BJ (cell line): ENCODE measurements at regions of chr7 and their contacts with region 1.

Region 1: DNA sequence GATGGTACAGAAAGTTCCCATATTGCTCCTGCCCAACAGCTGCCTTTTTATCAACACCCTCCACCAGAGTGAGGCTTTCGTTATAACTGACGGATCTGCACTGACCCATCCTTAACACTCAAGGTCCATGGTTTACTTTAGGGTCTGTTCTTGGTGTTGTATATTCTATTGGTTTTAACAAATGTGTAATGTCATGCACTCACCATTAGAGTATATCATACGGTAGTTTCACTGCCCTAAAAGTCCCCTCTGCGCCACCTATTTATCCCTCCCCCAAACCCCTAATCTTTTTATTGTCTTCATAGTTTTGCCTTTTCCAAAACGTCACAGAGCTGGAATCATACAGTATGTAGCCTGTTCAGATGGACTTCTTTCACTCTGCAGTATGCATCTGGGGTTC is 102.8 kb upstream of the TNS3 start:
- DNase-seq: no peak
- H3K4me3 ChIP-seq: no peak overlapping the region
- H3K27me3 ChIP-seq: no peaks in the 10 kb centered on the region
- CTCF ChIP-seq: no peak

Region 2: GRCh38 chr7:47818796-47819606 is 134.3 kb after region 1 on chr7:
- CTCF ChIA-PET with region 1: no interaction called
- POLR2A ChIA-PET with region 1: interaction called, 15 read pairs
- DNase-seq: no peak
- H3K4me3 ChIP-seq: no peak overlapping the region
- H3K27me3 ChIP-seq: no peaks in the 10 kb centered on the region
- CTCF ChIP-seq: peak; percentile 91